PC-3 (cell line): ENCODE measurements at regions of chr2 and their contacts with region 1.

Region 1: GRCh38 chr2:142596334-142597088 is 281.0 kb upstream of the KYNU start:
- DNase-seq: peak; percentile 90
- ATAC-seq: peak; percentile 82
- H3K4me3 ChIP-seq: no peak overlapping the region
- H3K27ac ChIP-seq: peak overlapping the region; percentile 42
- H3K4me1 ChIP-seq: peaks cover 48% of the 10 kb centered on the region
- H3K27me3 ChIP-seq: no peaks in the 10 kb centered on the region
- CTCF ChIP-seq: no peak

Region 2: DNA sequence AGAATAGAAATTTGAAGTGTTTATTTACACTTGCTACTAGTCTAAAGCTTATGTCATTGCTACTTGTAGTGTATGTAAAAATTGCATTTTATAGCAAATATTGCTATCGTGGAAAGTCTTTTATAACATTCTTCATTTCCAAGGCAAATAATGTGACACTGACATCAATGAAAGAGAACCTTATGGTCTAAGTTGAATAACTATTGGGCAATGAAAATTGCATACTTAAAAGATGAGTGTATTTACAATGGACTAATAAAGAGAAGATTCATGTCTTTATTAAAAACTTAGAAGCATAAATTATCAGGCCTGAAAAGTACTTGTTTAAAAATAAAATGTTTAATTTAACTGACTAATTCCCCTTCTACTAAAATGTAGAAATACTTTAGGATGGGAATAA is 547.9 kb before region 1 on chr2:
- CTCF ChIA-PET with region 1: no interaction called
- POLR2A ChIA-PET with region 1: no interaction called
- intact Hi-C with region 1: loop called (anchors 1 kb)
- DNase-seq: peak; percentile 69
- ATAC-seq: peak; percentile 84
- H3K4me3 ChIP-seq: no peak overlapping the region
- H3K27ac ChIP-seq: 0 out of 2 replicates have a peak overlapping the region, but pooled peaks have one; percentile 11
- H3K4me1 ChIP-seq: peaks cover 22% of the 10 kb centered on the region; the same call in 1 of the 2 replicates
- H3K27me3 ChIP-seq: no peaks in the 10 kb centered on the region
- CTCF ChIP-seq: no peak

Region 3: GRCh38 chr2:142280831-142281230 is 315.7 kb before region 1 on chr2:
- CTCF ChIA-PET with region 1: no interaction called
- POLR2A ChIA-PET with region 1: no interaction called
- intact Hi-C with region 1: loop called (anchors 5 kb)
- DNase-seq: no peak
- ATAC-seq: no peak
- H3K4me3 ChIP-seq: no peak overlapping the region
- H3K27ac ChIP-seq: no peak overlapping the region
- H3K4me1 ChIP-seq: no peaks in the 10 kb centered on the region; the same call in 1 of the 2 replicates
- H3K27me3 ChIP-seq: 0 out of 2 replicates have a peak, but pooled peaks cover 4% of the 10 kb centered on the region
- CTCF ChIP-seq: no peak

Region 4: GRCh38 chr2:142425551-142425950 is 171.0 kb before region 1 on chr2:
- CTCF ChIA-PET with region 1: no interaction called
- POLR2A ChIA-PET with region 1: no interaction called
- intact Hi-C with region 1: loop called (anchors 10 kb)
- DNase-seq: no peak
- ATAC-seq: peak; percentile 92
- H3K4me3 ChIP-seq: peak overlapping the region; percentile 24; the same call in 1 of the 2 replicates
- H3K27ac ChIP-seq: no peak overlapping the region
- H3K4me1 ChIP-seq: peaks cover 13% of the 10 kb centered on the region; the same call in 1 of the 2 replicates
- H3K27me3 ChIP-seq: peaks cover 4% of the 10 kb centered on the region; the same call in 1 of the 2 replicates
- CTCF ChIP-seq: no peak

Region 5: DNA sequence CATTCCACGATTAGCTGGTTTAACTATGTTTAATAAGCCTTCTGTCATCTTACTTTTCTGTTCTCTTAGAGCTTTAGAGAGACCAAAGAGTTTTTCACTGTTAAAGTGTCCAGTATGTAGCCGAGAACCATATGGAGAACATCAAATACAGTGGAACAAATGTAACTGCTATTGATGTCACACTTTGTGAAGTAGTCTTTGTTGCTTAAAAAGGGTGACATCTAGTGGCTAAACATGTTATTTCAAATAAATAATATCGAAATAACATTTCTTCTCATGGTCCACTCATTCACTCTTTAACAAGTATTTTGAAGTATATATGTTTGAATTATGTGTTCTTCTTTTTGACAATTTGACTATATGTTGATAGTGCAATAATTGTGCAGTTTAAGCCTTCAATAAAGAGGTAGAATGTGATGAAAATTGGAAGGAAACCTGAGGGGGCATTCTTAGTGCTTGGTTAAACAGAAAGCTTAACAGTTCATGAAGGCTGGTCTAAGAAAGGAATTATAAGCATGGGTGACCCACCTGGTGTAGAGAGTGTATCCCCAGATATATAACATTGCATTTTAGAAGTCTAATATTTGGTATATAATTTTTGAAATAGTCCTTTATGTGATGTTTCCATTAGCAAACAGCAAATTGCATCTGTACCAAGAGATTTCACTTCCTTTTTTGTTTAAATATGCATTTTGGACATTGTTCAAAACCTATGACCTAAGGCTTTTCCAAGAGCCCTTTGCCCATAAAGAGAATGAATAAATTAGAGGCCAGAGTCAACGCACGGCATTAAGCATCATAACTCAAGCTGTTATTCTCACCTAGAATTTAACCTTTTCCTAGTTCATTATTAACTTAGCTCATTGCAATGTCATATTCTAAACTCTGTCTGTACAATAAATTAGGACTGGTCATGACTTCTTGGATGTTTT is 393.0 kb after region 1 on chr2:
- CTCF ChIA-PET with region 1: interaction called, 17 read pairs
- POLR2A ChIA-PET with region 1: no interaction called
- intact Hi-C with region 1: no loop called
- DNase-seq: peak; percentile 61
- ATAC-seq: peak; percentile 55
- H3K4me3 ChIP-seq: no peak overlapping the region
- H3K27ac ChIP-seq: no peak overlapping the region
- H3K4me1 ChIP-seq: no peaks in the 10 kb centered on the region
- H3K27me3 ChIP-seq: no peaks in the 10 kb centered on the region
- CTCF ChIP-seq: peak; percentile 71